Heart right ventricle (tissue), 16 donors: ENCODE measurements at regions of chrX and their contacts with region 1.

Region 1: DNA sequence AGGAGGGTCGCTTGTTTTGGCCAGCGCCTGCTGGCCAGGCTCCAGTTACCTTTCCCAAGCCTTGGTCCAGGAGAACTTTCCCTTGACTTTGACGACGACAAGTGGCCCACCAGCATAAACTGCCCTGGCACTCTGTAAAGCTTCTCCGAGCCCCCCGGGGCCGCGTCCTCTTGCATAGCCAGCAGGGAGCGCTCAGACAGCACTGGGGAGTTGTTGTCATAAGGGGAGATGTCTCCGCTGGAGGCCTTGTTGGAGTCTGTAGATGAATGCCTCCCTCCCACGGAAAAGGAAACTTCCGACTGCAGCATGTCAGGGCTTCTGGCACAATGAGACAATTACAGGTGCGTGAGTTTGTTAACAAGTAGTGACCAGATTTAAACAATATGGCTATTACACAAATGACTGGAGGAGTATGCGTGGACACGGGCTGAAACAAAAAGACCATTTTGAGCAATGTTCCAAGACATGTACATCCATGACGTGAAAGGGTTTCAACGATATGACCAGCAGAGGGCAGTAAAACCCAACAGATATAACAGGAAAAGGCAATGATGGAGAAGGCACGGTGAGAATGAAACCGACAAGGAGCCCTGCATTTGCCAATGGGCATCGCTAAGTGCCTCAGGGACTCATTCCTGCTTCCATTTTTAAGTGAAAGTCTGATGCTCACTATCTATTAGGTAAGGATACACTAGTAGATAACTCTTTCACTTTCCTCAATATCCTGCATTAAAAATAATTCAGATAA is 33.0 kb downstream of the HCCS start:
- DNase-seq: peak in 1 of 2 donors; percentile 62
- ATAC-seq: peak in 7 of 8 donors; percentile 61 to 79 (median 76)
- H3K4me3 ChIP-seq: no peak overlapping the region
- H3K27ac ChIP-seq: no peak overlapping the region
- H3K4me1 ChIP-seq: peaks cover 0 to 6% (median 0%) of the 10 kb centered on the region in 9 donors
- H3K27me3 ChIP-seq: peaks cover 0 to 25% (median 0%) of the 10 kb centered on the region in 7 donors
- CTCF ChIP-seq: peak; percentile 10 to 71 (median 65)

Region 2: DNA sequence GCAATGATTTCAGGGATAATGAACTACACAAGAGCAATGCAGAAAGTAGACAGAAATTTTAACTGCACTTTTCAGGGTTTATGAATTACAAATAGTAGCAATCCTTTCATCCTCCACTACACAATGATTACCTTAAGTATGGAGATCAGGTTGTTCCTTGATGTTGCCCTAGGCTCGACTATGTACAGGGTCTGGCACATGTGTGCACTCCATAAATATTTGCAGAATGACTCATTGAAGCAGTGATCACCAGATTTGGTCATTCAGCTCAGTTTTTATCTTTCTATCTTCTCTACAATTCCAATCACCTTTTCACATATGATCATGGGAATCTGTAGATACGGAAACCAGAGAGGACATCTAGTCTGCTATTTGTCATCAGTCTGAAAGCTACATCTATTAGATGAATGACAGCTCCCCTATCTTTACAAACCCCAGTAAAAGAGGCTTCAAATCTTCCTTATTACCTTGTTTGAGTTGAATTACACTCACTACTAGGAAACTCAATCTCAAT is 204.7 kb before region 1 on chrX:
- intact Hi-C with region 1: no loop called
- DNase-seq: no peak
- ATAC-seq: no peak
- H3K4me3 ChIP-seq: no peak overlapping the region
- H3K27ac ChIP-seq: no peak overlapping the region
- H3K4me1 ChIP-seq: no peaks in the 10 kb centered on the region
- H3K27me3 ChIP-seq: no peaks in the 10 kb centered on the region
- CTCF ChIP-seq: no peak

Region 3: DNA sequence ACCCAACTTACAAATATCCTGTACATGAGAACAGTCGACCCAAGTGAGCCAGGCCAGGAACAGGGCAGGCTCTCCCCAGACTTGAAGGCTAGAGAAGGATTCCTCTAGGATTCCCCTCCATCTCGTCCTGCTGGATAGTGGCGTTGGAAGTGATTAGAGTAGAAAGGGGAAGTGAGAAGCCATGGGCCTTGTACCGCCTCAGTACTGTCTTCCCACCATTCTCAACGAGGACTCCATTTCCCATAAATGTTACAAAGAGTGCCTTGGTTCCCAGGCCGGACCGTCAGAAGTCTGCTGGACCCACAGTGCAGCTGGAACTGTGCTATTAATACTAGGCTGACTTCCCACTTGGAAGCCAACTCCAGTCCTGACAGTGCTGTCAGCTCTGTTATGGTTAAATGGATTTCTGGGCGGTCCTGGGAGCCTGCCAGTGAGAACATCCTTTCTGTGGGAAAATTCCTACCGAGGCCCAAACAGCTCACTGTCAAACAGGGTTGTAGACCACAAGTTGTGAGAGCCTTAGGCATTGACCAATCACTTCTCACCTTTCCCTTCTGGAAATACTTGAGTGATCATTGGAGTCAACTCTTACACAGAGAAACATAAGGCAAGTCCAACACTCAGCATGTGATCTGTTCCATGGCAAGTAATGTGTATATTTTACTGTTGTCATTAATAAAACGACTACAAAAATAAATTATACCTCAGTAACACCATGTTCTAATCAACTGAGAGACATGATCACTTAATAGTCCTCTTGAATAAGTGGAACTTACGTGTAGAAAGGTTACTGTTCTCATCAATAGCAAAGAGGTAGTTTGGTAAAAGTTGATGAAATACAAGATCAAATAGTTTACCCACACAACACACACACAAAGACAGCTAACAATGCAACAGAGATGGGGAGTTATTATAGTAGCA is 207.5 kb after region 1 on chrX:
- intact Hi-C with region 1: no loop called
- DNase-seq: peak; percentile 33 to 73
- ATAC-seq: peak; percentile 79 to 95 (median 89)
- H3K4me3 ChIP-seq: peak overlapping the region in 6 of 10 donors; percentile 5 to 41 (median 21)
- H3K27ac ChIP-seq: peak overlapping the region; percentile 22 to 82 (median 69)
- H3K4me1 ChIP-seq: peaks cover 0 to 9% (median 0%) of the 10 kb centered on the region in 9 donors
- H3K27me3 ChIP-seq: no peaks in the 10 kb centered on the region
- CTCF ChIP-seq: no peak

Region 4: GRCh38 chrX:11375614-11376119 is 231.6 kb after region 1 on chrX:
- intact Hi-C with region 1: loop called in 2 of 10 experiments (anchors 10 kb)
- DNase-seq: no peak
- ATAC-seq: no peak
- H3K4me3 ChIP-seq: no peak overlapping the region
- H3K27ac ChIP-seq: no peak overlapping the region
- H3K4me1 ChIP-seq: no peaks in the 10 kb centered on the region
- H3K27me3 ChIP-seq: peaks cover 0 to 10% (median 0%) of the 10 kb centered on the region in 7 donors
- CTCF ChIP-seq: no peak

Region 5: GRCh38 chrX:11381464-11381863 is 237.4 kb after region 1 on chrX:
- intact Hi-C with region 1: loop called in 2 of 10 experiments (anchors 10 kb)
- DNase-seq: peak in 1 of 2 donors; percentile 40
- ATAC-seq: peak in 6 of 8 donors; percentile 52 to 87 (median 82)
- H3K4me3 ChIP-seq: no peak overlapping the region
- H3K27ac ChIP-seq: no peak overlapping the region
- H3K4me1 ChIP-seq: peaks cover 0 to 6% (median 0%) of the 10 kb centered on the region in 9 donors
- H3K27me3 ChIP-seq: peaks cover 0 to 5% (median 0%) of the 10 kb centered on the region in 7 donors
- CTCF ChIP-seq: peak in 8 of 9 donors; percentile 16 to 65 (median 54)

Region 6: DNA sequence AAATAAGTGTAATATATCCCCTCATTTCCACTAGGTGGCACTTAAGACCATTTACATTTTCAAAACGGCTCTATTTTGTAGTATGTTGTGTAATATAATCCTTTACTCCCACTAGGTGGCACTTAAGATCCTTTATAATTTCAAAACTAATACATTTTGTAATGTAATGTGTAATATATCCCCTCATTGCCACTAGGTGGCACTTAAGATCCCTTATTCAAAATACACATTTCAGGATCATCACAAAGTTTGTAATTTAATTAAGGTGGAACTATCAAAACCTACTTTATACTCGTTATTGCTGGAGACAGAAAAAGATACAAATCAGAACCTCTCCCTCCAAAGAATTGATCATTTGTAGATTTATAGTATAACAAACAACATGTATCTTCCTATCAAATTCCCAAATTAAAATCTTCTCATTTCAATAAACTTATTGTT is 389.1 kb after region 1 on chrX:
- intact Hi-C with region 1: loop called in 9 of 10 experiments (anchors 2 to 10 kb)
- DNase-seq: peak in 1 of 2 donors; percentile 3
- ATAC-seq: peak; percentile 68 to 91 (median 86)
- H3K4me3 ChIP-seq: no peak overlapping the region
- H3K27ac ChIP-seq: peak overlapping the region in 1 of 10 donors; percentile 35
- H3K4me1 ChIP-seq: no peaks in the 10 kb centered on the region
- H3K27me3 ChIP-seq: peaks cover 0 to 14% (median 0%) of the 10 kb centered on the region in 7 donors
- CTCF ChIP-seq: peak; percentile 51 to 89 (median 81)

Region 7: GRCh38 chrX:11759461-11760311 is 615.6 kb after region 1 on chrX:
- intact Hi-C with region 1: loop called in 3 of 10 experiments (anchors 10 kb)
- DNase-seq: peak; percentile 50 to 90
- ATAC-seq: peak; percentile 89 to 98 (median 96)
- H3K4me3 ChIP-seq: peak overlapping the region; percentile 25 to 84 (median 74)
- H3K27ac ChIP-seq: peak overlapping the region in 8 of 10 donors; percentile 88 to 94 (median 90)
- H3K4me1 ChIP-seq: peaks cover 0 to 20% (median 9%) of the 10 kb centered on the region in 9 donors
- H3K27me3 ChIP-seq: peaks cover 0 to 9% (median 0%) of the 10 kb centered on the region in 7 donors
- CTCF ChIP-seq: peak in 1 of 9 donors; percentile 10

Region 8: GRCh38 chrX:11770320-11770719 is 626.2 kb after region 1 on chrX:
- intact Hi-C with region 1: loop called in 6 of 10 experiments (anchors 5 to 10 kb)
- DNase-seq: no peak
- ATAC-seq: peak in 7 of 8 donors; percentile 25 to 76 (median 63)
- H3K4me3 ChIP-seq: no peak overlapping the region
- H3K27ac ChIP-seq: no peak overlapping the region
- H3K4me1 ChIP-seq: peaks cover 0 to 7% (median 0%) of the 10 kb centered on the region in 9 donors
- H3K27me3 ChIP-seq: no peaks in the 10 kb centered on the region
- CTCF ChIP-seq: peak; percentile 47 to 88 (median 77)